MCF 10A (cell line): ENCODE measurements at regions of chr20 and their contacts with region 1.

Region 1: GRCh38 chr20:36585463-36586108 is 12.2 kb downstream of the TGIF2 start:
- DNase-seq: peak; percentile 80
- H3K4me3 Mint-ChIP-seq: no peak overlapping the region
- H3K27ac Mint-ChIP-seq: no peak overlapping the region
- H3K4me1 Mint-ChIP-seq: peaks cover 7% of the 10 kb centered on the region
- H3K27me3 Mint-ChIP-seq: no peaks in the 10 kb centered on the region
- CTCF ChIP-seq: no peak

Region 2: GRCh38 chr20:36506253-36506652 is 79.3 kb before region 1 on chr20:
- CTCF ChIA-PET with region 1: no interaction called
- POLR2A ChIA-PET with region 1: no interaction called
- intact Hi-C with region 1: no loop called
- DNase-seq: peak; percentile 25
- H3K4me3 Mint-ChIP-seq: no peak overlapping the region
- H3K27ac Mint-ChIP-seq: no peak overlapping the region
- H3K4me1 Mint-ChIP-seq: peaks cover 5% of the 10 kb centered on the region
- H3K27me3 Mint-ChIP-seq: no peaks in the 10 kb centered on the region
- CTCF ChIP-seq: no peak

Region 3: GRCh38 chr20:36573103-36573794 is 12.3 kb before region 1 on chr20 and contains the start of gene TGIF2:
- CTCF ChIA-PET with region 1: interaction called, 6 read pairs
- POLR2A ChIA-PET with region 1: interaction called, 20 read pairs
- intact Hi-C with region 1: no loop called
- DNase-seq: peak; percentile 57
- H3K4me3 Mint-ChIP-seq: peak within 1 kb of the TSS; percentile 74
- H3K27ac Mint-ChIP-seq: peak within 1 kb of the TSS; percentile 87
- H3K4me1 Mint-ChIP-seq: peaks cover 19% of the 10 kb centered on the region
- H3K27me3 Mint-ChIP-seq: no peaks in the 10 kb centered on the region
- CTCF ChIP-seq: no peak
- total RNA-seq, gene TGIF2: 5.9 and 9.7 TPM in 2 replicates

Region 4: DNA sequence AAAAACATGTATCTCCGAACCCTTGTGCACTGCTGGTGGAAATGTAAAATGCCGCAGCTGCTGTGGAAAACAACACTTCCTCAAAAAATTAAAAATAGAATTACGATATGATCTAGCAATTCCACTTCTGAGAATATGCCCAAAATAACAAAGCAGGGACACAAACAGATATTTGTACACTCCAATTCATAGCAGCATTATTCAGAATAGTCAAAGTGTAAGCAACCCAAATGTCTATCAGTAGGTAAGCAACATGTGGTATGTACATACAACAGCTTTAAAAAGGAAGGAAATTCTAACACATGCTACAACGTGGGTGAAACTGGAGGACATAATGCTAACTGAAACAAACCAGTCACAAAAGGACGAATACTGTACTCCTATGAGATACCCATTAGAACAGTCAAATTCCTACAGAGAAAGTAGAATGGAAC is 14.3 kb after region 1 on chr20:
- CTCF ChIA-PET with region 1: interaction called, 40 read pairs
- POLR2A ChIA-PET with region 1: interaction called, 67 read pairs
- intact Hi-C with region 1: no loop called
- DNase-seq: no peak
- H3K4me3 Mint-ChIP-seq: no peak overlapping the region
- H3K27ac Mint-ChIP-seq: no peak overlapping the region
- H3K4me1 Mint-ChIP-seq: no peaks in the 10 kb centered on the region
- H3K27me3 Mint-ChIP-seq: no peaks in the 10 kb centered on the region
- CTCF ChIP-seq: no peak

Region 5: GRCh38 chr20:36624068-36624943 is 38.7 kb after region 1 on chr20:
- CTCF ChIA-PET with region 1: no interaction called
- POLR2A ChIA-PET with region 1: no interaction called
- intact Hi-C with region 1: no loop called
- DNase-seq: no peak
- H3K4me3 Mint-ChIP-seq: no peak overlapping the region
- H3K27ac Mint-ChIP-seq: peak overlapping the region; percentile 11
- H3K4me1 Mint-ChIP-seq: peaks cover 6% of the 10 kb centered on the region
- H3K27me3 Mint-ChIP-seq: no peaks in the 10 kb centered on the region
- CTCF ChIP-seq: no peak